Astrocyte of the cerebellum (primary cell): ENCODE measurements at regions of chr6 and their contacts with region 1.

Region 1: DNA sequence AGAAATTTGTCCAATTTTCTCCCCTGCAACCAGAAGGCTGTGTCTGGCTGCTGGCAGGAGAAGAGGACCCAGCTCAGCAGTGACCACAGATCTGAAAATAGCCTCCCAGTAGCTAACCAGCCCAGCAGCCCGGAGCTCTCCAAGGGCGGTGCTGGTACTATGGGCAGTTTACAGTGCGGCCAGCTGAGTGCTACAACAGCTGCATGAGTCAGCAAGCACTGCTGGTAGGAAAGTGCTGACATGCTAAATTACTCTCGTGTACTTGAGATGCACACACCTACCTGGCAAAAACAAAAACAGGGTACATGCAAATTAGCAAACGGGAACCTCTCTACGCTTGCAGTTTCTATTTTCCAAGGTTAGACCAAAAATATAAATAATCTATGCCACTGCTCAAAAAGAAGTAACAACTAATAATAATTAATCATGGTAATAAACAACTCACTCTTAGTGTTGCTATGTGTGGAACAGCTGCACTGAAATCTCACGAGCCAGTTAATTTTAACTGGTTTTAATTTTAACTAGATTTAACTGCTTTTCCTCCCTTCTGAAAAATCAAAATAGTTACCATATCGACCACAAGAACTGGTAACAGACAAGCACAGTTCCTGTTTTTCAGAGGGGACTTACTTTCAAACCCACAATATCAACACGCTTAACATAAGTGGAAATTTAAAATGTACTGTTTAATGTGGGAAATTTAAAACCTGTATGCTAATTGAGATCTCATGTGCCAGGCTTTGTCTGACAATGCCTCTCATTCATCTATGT is 10.8 kb downstream of the BACH2 start:
- DNase-seq: peak; percentile 85
- H3K4me3 ChIP-seq: peak overlapping the region; percentile 28
- CTCF ChIP-seq: no peak

Region 2: GRCh38 chr6:89984926-89985750 is 300.7 kb before region 1 on chr6:
- in situ Hi-C with region 1: loop called (anchors 10 kb)
- DNase-seq: peak; percentile 51
- H3K4me3 ChIP-seq: no peak overlapping the region
- CTCF ChIP-seq: no peak

Region 3: DNA sequence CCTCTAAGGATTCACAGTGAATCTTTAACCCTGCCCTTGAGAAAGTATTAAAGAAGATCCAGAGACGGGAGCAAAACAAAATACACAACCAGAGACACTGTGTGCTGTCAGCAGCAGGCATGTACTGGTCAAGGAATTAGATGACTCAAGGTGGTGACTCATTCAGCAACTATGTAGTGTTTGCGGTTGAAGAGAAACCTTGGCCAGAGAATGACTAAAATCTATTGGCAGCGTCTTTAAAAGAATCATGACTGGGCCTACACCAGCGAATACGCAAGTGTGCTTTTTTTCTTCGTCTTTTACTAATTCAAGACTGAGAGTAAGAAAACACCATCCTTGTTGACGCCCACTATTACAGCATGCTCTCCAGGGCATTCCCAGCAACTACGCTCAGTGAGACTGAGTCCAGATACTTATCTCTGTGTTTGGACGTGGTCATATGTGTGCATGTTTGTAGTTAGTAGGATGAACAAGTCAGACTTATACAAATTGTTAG is 83.3 kb after region 1 on chr6:
- in situ Hi-C with region 1: loop called (anchors 5 kb)
- DNase-seq: peak; percentile 100
- H3K4me3 ChIP-seq: no peak overlapping the region
- CTCF ChIP-seq: peak; percentile 10

Region 4: GRCh38 chr6:90425161-90425641 is 139.4 kb after region 1 on chr6:
- in situ Hi-C with region 1: no loop called
- DNase-seq: no peak
- H3K4me3 ChIP-seq: no peak overlapping the region
- CTCF ChIP-seq: no peak